Heart left ventricle (tissue), 16 donors: ENCODE measurements at regions of chr5 and their contacts with region 1.

Region 1: GRCh38 chr5:157729858-157730257 is 1.4 kb upstream of the THG1L start:
- DNase-seq: no peak
- ATAC-seq: no peak
- H3K4me3 ChIP-seq: no peak overlapping the region
- H3K27ac ChIP-seq: no peak overlapping the region
- H3K4me1 ChIP-seq: peaks cover 0 to 10% (median 5%) of the 10 kb centered on the region in 12 donors
- H3K27me3 ChIP-seq: no peaks in the 10 kb centered on the region
- CTCF ChIP-seq: no peak
- POLR2A ChIP-seq: no peak

Region 2: DNA sequence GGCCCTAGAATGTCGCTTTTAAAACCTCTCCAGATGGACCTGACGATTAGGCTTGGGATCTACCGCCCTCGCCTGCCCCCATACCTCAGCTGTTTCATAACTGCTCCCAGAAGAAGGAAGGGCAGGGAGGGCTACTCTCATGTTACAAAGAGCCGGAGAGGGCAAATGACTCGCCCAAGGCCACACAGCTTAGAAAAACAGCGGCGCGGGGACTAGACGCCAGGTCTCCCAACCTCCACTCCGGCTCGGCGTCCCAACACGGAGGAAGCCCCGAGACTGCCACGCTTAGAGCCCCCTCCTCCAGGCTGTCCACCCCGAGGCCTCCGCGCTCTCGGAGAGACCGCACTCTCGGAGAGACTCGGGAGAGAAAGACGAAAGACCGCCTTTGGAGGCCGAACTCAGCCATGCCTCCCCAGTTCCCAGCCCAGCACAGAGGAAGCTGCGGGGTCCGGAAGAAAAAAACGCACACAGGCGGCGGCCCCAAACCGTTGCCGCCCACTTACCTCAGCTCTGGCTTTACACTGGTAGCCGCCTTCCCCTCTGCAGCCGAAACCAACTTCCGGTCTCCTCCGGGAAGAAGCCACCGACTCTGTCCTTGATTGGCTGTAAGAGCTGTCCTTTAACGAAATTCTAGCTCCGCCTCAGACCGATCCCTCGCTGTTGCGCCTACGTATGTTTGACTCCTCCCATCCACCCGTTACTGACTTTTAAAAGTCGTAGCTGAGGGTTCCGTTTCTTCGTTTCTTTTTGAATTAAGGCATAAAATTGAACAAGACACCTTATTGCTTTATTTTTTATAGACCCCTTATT is 587.3 kb before region 1 on chr5 and contains the start of gene MED7:
- intact Hi-C with region 1: loop called in 1 of 10 experiments (anchors 10 kb)
- DNase-seq: peak; percentile 92 to 97 (median 95)
- ATAC-seq: peak; percentile 98 to 99 (median 99)
- H3K4me3 ChIP-seq: peak within 1 kb of the TSS; percentile 65 to 95 (median 88)
- H3K27ac ChIP-seq: peak within 1 kb of the TSS; percentile 80 to 95 (median 90)
- H3K4me1 ChIP-seq: peaks cover 0 to 21% (median 9%) of the 10 kb centered on the region in 12 donors
- H3K27me3 ChIP-seq: no peaks in the 10 kb centered on the region
- CTCF ChIP-seq: no peak
- POLR2A ChIP-seq: peak; percentile 59 to 85
- total RNA-seq, gene MED7: 6.9 to 11.0 (median 9.6) TPM